ENCODE measurements at regions of chr9 and their contacts with region 1.

Region 1: DNA sequence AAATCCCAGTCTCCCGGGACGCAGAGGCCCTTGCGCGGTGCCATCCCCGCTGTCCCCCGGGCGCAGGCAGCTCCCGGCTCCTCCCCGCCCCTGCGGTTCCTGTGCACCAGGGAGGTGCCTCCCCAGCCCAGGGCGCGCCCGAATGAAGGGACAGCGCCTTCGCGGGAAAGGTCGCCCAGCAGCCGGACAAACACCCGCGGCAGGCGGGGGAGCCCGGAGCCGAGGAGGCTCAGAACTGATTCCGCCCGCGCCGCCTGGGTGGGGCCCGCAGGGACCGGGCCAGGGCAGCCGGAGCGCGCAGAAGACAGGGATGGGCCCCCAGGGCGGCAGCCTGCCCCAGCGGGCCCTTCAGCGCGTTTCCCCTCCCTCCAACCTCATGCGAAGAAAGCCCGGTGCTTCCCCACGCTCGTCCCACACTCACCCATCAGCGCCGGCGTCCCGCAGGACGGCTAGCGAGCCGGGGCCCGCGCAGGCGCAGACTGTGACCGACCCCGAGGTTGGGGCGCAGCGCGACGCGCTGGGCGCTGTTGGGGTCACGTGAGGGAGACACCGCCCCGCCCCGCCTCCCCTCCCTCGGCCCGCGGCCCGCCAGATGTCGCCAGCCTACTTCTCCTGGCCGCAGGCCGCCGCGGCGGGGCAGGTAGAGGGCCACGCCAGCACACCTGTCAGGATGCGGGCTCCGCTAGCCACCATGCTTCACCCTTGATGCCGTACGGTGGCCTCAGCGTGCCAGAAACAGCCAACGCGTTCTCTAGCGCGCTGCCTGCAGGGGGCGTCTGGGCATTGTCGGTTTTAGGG is at the start of gene SLC25A51:
- DNase-seq: peak; percentile 94
- H3K4me3 ChIP-seq: peak within 1 kb of the TSS; percentile 60 to 83 (median 78)
- H3K27ac ChIP-seq: peak within 1 kb of the TSS; percentile 67
- H3K4me1 ChIP-seq: peaks cover 25% of the 10 kb centered on the region
- H3K27me3 ChIP-seq: no peaks in the 10 kb centered on the region
- CTCF ChIP-seq: peak; percentile 92 to 98
- total RNA-seq, gene SLC25A51: 30.0 to 78.0 TPM

Region 2: DNA sequence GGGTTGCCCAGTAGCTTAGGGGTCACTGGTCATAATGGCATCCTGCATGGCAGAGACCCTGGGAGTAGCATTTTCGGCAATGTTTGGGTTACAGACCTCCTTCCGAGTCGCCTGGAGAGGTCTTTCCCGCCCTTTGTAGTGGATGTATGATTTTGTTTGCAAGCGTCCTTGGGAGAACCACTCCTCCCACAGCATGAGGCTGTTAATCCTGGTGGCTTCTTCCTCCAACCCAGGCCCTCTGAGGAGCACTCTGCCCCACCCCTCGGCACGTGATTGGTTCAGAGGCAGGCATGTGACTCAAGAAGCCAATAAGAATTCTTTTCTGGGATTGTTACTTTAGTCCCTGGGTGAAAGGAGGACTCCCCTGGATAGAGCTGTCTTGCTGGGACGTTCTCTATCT is 511.6 kb before region 1 on chr9:
- CTCF ChIA-PET with region 1: no interaction called
- dilution Hi-C with region 1: no loop called
- in situ Hi-C with region 1: no loop called
- intact Hi-C with region 1: no loop called
- DNase-seq: no peak
- H3K4me3 ChIP-seq: no peak overlapping the region
- H3K27ac ChIP-seq: no peak overlapping the region
- H3K4me1 ChIP-seq: no peaks in the 10 kb centered on the region
- H3K27me3 ChIP-seq: no peaks in the 10 kb centered on the region
- CTCF ChIP-seq: no peak

Region 3: GRCh38 chr9:37592108-37592951 is 311.5 kb before region 1 on chr9 and contains the start of gene TOMM5:
- CTCF ChIA-PET with region 1: no interaction called
- dilution Hi-C with region 1: no loop called
- in situ Hi-C with region 1: loop called in 1 of 2 experiments (anchors 25 kb)
- intact Hi-C with region 1: loop called (anchors 5 kb)
- DNase-seq: peak; percentile 90
- H3K4me3 ChIP-seq: peak within 1 kb of the TSS; percentile 95 to 98 (median 98)
- H3K27ac ChIP-seq: peak within 1 kb of the TSS; percentile 88
- H3K4me1 ChIP-seq: peaks cover 25% of the 10 kb centered on the region
- H3K27me3 ChIP-seq: no peaks in the 10 kb centered on the region
- CTCF ChIP-seq: no peak
- total RNA-seq, gene TOMM5: 69.7 to 135 TPM

Region 4: GRCh38 chr9:37938121-37938891 is 34.5 kb after region 1 on chr9:
- CTCF ChIA-PET with region 1: no interaction called
- dilution Hi-C with region 1: no loop called
- in situ Hi-C with region 1: no loop called
- intact Hi-C with region 1: no loop called
- DNase-seq: peak; percentile 65
- H3K4me3 ChIP-seq: no peak overlapping the region
- H3K27ac ChIP-seq: no peak overlapping the region
- H3K4me1 ChIP-seq: peaks cover 48% of the 10 kb centered on the region
- H3K27me3 ChIP-seq: no peaks in the 10 kb centered on the region
- CTCF ChIP-seq: no peak

Measured in mammary epithelial cell (primary cell).